ENCODE measurements at regions of chr6 and their contacts with region 1.

Region 1: DNA sequence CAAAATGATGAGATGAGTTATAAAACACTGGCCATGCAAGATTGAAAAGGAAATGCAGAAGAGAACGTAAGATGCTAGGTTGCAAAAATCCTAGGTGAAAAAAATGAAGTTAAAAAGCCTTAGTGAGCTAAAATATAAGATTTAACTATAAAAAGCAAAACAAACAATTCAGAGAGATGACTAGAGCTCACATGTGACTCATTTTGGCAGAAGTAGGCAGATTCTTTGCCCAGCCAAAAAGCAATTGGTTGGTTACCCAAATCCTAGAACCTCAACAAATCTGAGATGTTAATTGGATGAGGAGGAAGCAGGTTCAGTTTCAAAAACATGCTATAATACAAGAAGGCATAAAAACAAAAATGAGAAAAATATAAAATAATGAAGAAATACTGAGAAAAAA is 249.1 kb downstream of the OGFRL1 start:
- DNase-seq: no peak
- H3K4me3 ChIP-seq: no peak overlapping the region
- H3K27ac ChIP-seq: no peak overlapping the region
- H3K4me1 ChIP-seq: no peaks in the 10 kb centered on the region
- H3K27me3 ChIP-seq: no peaks in the 10 kb centered on the region
- CTCF ChIP-seq: no peak
- EP300 ChIP-seq: no peak
- POLR2A ChIP-seq: no peak

Region 2: DNA sequence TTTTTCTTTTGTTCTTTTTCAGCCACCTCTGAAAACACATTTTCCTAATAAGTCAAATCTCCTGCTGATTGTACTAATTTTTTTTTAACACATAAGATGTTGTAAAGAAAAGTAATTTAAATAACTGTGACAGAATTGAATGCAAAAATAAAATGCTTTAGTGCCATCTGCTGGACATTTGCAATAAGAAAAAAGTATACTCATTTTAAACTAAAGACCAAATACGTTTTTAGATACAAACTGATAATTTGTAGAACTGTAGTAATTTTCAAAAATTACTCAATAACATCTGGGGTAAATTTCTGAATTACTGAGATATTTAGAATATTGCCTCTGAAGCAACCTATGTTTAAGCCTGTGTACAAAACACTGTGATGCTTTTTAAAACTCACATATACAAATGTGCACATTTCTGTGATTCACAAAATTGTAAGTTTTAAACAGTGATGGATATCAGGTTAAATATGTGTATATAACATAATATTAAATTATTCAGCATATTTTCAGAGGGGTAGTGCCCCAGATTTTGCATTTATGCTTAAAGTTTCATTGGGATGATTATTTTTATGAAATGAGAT is 547.4 kb after region 1 on chr6:
- intact Hi-C with region 1: loop called (anchors 5 kb)
- DNase-seq: no peak
- H3K4me3 ChIP-seq: no peak overlapping the region
- H3K27ac ChIP-seq: no peak overlapping the region
- H3K4me1 ChIP-seq: no peaks in the 10 kb centered on the region
- H3K27me3 ChIP-seq: peaks cover 0 to 11% (median 0%) of the 10 kb centered on the region in 4 donors
- CTCF ChIP-seq: peak; percentile 13 to 55 (median 50)
- EP300 ChIP-seq: no peak
- POLR2A ChIP-seq: no peak